ENCODE measurements at regions of chr12 and their contacts with region 1.

Region 1: GRCh38 chr12:65093606-65094005 is 27.5 kb downstream of the WIF1 start:
- DNase-seq: no peak

Region 2: DNA sequence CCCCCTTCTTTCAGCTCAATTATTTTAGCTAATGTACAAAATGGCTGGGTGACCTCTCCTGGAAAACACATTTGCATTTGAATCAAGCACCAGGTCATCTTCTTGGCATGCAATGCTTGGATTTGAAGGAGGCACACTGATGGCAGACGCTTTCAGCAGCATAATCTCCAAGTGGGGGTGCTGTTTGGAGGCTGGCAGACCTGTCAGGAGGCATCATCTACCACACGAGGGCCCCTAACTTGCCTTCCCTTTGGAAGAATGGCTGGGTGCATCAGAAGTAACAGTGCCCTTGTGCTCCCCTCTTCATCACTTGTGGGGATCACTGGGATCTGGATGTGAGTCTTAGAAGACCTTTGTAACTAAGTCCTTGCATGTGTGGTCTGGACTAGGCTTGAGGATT is 41.0 kb before region 1 on chr12:
- intact Hi-C with region 1: loop called in 1 of 2 experiments (anchors 2 kb)
- DNase-seq: no peak